ENCODE measurements at regions of chr12 and their contacts with region 1.

Region 1: DNA sequence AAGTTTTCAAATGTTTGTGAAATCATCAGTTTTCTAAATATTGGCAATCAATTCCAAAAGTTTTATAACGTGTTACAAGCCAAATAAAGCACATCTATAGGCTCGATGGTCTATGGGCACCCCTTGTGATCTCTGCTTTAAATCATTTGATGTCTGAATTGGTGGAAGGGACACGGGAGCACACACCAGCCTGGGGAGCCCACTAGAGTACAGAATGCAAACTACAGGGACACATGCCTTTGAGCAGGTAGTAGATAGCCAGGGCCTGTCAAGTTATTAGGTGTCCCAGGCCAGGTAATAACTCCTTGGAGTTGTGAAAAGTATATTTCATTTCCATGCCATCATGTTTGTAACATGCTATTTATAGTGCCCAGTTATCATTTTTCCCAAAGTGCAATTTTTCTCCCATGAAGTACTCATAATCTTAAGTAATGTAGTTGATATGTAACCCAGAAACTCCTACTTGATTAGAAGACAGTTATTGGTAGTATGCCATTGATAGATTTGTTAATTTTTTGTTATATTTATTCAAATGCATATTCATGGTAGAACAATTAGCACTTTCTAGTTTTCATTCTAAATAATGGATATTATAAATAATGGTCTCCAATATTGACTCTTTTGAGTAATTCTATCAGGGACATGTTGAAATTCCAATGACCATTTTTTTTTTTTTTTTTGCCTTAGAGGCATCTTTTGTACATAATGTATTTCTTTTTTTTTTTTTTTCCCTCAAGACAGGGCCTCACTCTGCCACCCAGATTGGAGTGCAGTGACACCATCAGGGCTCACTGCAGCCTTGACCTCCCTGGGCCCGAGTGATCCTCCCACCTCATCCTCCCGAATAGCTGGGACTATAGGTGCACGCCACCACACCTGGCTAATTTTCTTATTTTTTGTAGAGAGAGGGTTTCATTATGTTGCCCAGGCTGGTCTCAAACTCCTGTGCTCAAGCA is 96.9 kb upstream of the FGD4 start:
- DNase-seq: peak in 2 of 4 donors; percentile 20 to 35
- ATAC-seq: peak; percentile 50
- H3K4me3 ChIP-seq: no peak overlapping the region
- H3K27ac ChIP-seq: no peak overlapping the region
- H3K4me1 ChIP-seq: no peaks in the 10 kb centered on the region
- H3K27me3 ChIP-seq: no peaks in the 10 kb centered on the region
- CTCF ChIP-seq: peak in 4 of 7 experiments; percentile 25 to 46 (median 32)
- POLR2A ChIP-seq: no peak

Region 2: GRCh38 chr12:31647086-31647491 is 655.4 kb before region 1 on chr12:
- intact Hi-C with region 1: loop called (anchors 10 kb)
- DNase-seq: no peak
- ATAC-seq: no peak
- H3K4me3 ChIP-seq: no peak overlapping the region
- H3K27ac ChIP-seq: no peak overlapping the region
- H3K4me1 ChIP-seq: peaks cover 32% of the 10 kb centered on the region
- H3K27me3 ChIP-seq: no peaks in the 10 kb centered on the region
- CTCF ChIP-seq: no peak
- POLR2A ChIP-seq: no peak

Region 3: DNA sequence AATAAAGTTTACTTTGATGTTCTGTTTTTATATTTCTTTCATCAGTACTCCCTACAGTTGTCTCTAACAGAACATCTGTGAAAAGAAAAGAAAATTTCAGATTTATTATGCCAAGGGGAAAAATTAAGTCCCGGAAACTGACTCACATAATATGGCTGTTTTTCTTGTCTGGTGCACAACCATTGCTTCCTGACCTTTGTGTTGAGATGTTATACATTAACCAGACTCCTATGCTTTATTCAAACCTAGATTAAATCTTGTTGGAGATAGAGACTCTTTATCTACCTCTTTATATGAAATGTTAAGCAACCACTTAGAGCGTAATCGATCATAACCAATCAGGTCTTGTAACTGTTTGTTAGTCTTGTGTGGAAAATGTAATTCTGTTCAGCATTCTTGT is 233.4 kb before region 1 on chr12:
- intact Hi-C with region 1: loop called (anchors 10 kb)
- DNase-seq: no peak
- ATAC-seq: no peak
- H3K4me3 ChIP-seq: no peak overlapping the region
- H3K27ac ChIP-seq: no peak overlapping the region
- H3K4me1 ChIP-seq: peaks cover 5% of the 10 kb centered on the region
- H3K27me3 ChIP-seq: no peaks in the 10 kb centered on the region
- CTCF ChIP-seq: no peak
- POLR2A ChIP-seq: no peak

Region 4: GRCh38 chr12:32780071-32780470 is 477.6 kb after region 1 on chr12:
- intact Hi-C with region 1: no loop called
- DNase-seq: no peak
- ATAC-seq: no peak
- H3K4me3 ChIP-seq: no peak overlapping the region
- H3K27ac ChIP-seq: no peak overlapping the region
- H3K4me1 ChIP-seq: no peaks in the 10 kb centered on the region
- H3K27me3 ChIP-seq: no peaks in the 10 kb centered on the region
- CTCF ChIP-seq: no peak
- POLR2A ChIP-seq: no peak